ENCODE measurements at regions of chr11 and their contacts with region 1.

Region 1: DNA sequence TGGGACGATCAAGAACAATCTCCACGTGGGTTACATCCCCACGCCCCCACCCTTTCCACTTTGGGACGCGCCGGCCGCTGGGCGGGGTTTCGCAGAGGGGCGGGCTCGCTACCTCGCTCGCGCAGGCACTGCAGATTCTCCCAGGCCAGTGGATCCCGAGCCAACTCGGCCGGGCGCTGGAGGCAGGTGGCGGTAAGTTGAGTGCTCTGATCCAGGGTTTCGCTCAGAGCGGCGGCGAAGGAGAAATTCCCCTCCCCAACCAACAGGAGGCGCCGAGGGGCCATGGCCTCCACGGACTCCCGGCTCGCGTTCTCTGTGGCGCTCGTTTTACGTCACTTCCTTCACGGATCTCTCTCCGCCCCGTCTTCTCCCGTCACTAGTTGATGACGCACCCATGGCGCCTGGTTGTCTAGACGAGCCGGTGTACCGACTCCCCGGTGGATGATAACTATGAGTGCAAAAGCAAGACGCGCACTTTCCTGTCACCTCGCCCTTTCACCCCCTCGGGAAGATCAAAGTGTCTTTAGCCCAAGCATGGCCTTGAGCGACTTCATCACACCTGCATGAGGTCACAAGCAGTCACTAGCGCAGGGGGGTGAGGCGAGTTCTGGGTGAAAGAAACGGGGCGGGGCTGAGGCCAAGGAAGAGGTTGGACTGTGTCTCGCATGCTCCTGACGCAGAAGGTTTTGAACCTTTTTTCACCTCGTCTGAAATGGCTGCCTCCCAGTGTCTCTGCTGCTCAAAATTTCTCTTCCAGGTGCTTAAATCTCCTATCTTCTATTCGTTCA is at the starts of genes CFAP68 and FDXACB1:
- DNase-seq: peak; percentile 98
- ATAC-seq: peak; percentile 85
- H3K4me3 ChIP-seq: peak within 1 kb of the TSS; percentile 83 to 91
- H3K27ac ChIP-seq: peak within 1 kb of the TSS; percentile 65
- H3K4me1 ChIP-seq: peaks cover 3 to 15% of the 10 kb centered on the region in 2 experiments; a peak in 3 of 4 replicates
- H3K27me3 ChIP-seq: no peaks in the 10 kb centered on the region
- CTCF ChIP-seq: peak; percentile 78 to 91 (median 87)
- POLR2A ChIP-seq: peak; percentile 74
- RAD21 ChIP-seq: peak; percentile 91
- total RNA-seq, gene CFAP68: 49.6 TPM
- total RNA-seq, gene FDXACB1: 3.8 TPM

Region 2: DNA sequence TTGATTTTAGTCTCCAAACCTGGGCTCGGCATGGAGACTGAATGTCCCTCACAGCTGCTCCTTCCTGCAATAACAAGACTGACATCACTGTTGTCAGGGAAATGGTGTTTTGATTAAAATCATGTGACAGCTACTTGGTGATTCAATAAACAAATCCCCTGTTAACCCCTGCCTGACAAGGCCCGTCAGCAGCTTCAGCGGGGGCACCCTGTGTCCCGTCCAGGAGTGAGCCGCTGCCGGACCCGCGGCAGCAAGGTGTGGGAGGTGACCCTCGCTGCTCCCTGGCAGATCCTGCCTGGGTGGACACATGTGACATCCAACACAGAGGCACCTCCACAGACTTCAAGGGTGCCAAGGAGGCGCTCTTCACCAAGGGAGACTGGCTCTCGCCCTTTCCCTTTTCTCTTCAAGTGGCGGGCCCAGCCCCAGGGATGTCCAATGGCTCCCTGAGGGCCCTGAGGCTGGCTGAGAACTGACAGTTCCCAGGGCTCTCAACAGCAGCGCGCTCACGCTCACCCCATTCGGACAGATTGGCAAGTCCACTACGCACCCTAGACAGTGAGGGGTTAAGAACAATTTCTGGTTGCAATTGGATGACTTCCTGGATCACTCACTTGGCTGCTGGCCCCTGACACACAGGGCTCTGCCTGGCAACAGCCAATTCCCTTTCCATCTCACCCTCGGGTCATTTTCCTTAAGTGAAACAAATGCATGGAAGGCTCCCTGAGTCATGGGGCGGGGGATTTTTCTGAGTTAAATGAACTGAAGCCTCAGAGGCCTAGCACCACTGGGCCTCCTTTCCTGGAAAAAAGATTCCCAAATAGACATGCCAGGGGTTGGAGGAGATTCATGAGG is 143.6 kb before region 1 on chr11:
- CTCF ChIA-PET with region 1: no interaction called
- POLR2A ChIA-PET with region 1: no interaction called
- RAD21 ChIA-PET with region 1: no interaction called
- intact Hi-C with region 1: no loop called
- DNase-seq: no peak
- ATAC-seq: no peak
- H3K4me3 ChIP-seq: no peak overlapping the region
- H3K27ac ChIP-seq: no peak overlapping the region
- H3K4me1 ChIP-seq: peaks cover 0 to 19% of the 10 kb centered on the region in 2 experiments; a peak in 1 of 4 replicates
- H3K27me3 ChIP-seq: no peaks in the 10 kb centered on the region
- CTCF ChIP-seq: no peak
- POLR2A ChIP-seq: no peak
- RAD21 ChIP-seq: no peak

Region 3: GRCh38 chr11:112163875-112164685 is 285.0 kb after region 1 on chr11 and contains the start of gene IL18:
- CTCF ChIA-PET with region 1: no interaction called
- POLR2A ChIA-PET with region 1: no interaction called
- RAD21 ChIA-PET with region 1: no interaction called
- intact Hi-C with region 1: loop called (anchors 5 kb)
- DNase-seq: peak; percentile 78
- ATAC-seq: peak; percentile 97
- H3K4me3 ChIP-seq: peak within 1 kb of the TSS; percentile 68 to 79
- H3K27ac ChIP-seq: peak within 1 kb of the TSS; percentile 57
- H3K4me1 ChIP-seq: peaks cover 22 to 61% of the 10 kb centered on the region in 2 experiments
- H3K27me3 ChIP-seq: no peaks in the 10 kb centered on the region
- CTCF ChIP-seq: 0 out of 6 replicates have a peak, but pooled peaks of 1 of the 3 experiments have one; percentile 6
- POLR2A ChIP-seq: no peak
- RAD21 ChIP-seq: peak; percentile 1; the same call in 1 of the 2 replicates
- total RNA-seq, gene IL18: 112 TPM

Measured in HCT116 (cell line).